ENCODE measurements at regions of chr15 and their contacts with region 1.

Region 1: GRCh38 chr15:84929744-84930371 is 45.4 kb downstream of the SLC28A1 start:
- DNase-seq: no peak
- H3K4me3 ChIP-seq: no peak overlapping the region
- H3K27ac ChIP-seq: no peak overlapping the region
- H3K27me3 ChIP-seq: no peaks in the 10 kb centered on the region
- CTCF ChIP-seq: no peak

Region 2: GRCh38 chr15:84588053-84588874 is 341.6 kb before region 1 on chr15:
- intact Hi-C with region 1: loop called (anchors 5 to 10 kb)
- DNase-seq: peak; percentile 59 to 88 (median 76)
- H3K4me3 ChIP-seq: peak overlapping the region; percentile 9 to 67 (median 50)
- H3K27ac ChIP-seq: no peak overlapping the region
- H3K27me3 ChIP-seq: no peaks in the 10 kb centered on the region
- CTCF ChIP-seq: peak in 55 of 56 donors; percentile 66 to 97 (median 87)

Region 3: GRCh38 chr15:84748274-84749110 is 181.4 kb before region 1 on chr15 and contains the start of gene ZNF592:
- intact Hi-C with region 1: loop called in 1 of 2 experiments (anchors 10 kb)
- DNase-seq: peak; percentile 42 to 86 (median 68)
- H3K4me3 ChIP-seq: peak within 1 kb of the TSS; percentile 76 to 98 (median 91)
- H3K27ac ChIP-seq: peak within 1 kb of the TSS; percentile 96 to 100 (median 99)
- H3K27me3 ChIP-seq: no peaks in the 10 kb centered on the region
- CTCF ChIP-seq: peak in 7 of 56 donors; percentile 5 to 44 (median 23)
- total RNA-seq, gene ZNF592: 24.1 to 48.5 (median 30.4) TPM

Region 4: GRCh38 chr15:84879088-84879792 is 50.6 kb before region 1 on chr15:
- intact Hi-C with region 1: loop called in 1 of 2 experiments (anchors 2 kb)
- DNase-seq: no peak
- H3K4me3 ChIP-seq: no peak overlapping the region
- H3K27ac ChIP-seq: no peak overlapping the region
- H3K27me3 ChIP-seq: peaks cover 0 to 5% (median 0%) of the 10 kb centered on the region in 45 donors
- CTCF ChIP-seq: no peak

Measured in dorsolateral prefrontal cortex (tissue), 120 donors.